B cell (primary cell): ENCODE measurements at regions of chr5 and their contacts with region 1.

Region 1: DNA sequence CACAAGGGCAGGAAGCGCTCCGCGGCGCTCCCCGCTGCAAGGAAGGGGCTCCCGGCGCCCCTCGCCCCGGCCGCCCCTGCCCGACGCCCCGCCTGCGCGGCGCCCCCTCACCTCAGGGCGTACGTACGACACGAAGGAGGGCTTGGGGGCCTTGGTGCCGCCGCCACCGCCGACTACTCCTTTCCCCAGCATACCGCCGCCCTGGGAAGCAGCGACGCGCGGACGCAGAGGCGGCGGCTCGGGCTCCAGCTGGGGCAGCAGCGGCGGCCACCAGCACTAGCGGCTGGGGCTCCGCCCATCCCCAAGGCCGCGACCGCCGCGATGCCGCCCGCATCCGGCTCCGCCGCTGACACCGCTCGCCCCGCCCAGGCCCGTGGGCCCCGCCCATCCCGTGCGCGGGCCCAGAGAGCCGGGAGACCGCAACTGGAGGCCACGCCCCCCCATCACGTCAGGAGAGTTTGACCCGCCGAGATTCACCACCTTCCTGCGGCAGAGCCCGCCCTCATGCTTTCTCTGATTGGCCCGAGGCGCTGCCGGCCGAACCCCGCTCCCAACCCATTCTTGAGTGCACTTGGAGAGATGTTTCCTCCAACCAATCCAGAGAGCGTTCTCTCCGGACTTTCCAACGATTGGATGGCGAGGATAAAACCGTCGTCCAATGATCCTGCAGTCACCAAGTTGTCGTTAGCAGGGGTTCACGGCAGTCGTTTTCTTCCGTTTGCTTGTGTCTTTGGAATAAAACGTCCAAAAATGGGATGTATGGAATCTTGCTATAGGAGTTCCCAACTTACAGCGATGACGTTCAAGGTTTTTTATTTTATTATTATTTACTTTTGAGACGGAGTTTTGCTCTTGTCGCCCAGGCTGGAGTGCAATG is at the start of gene MTMR12:
- DNase-seq: peak; percentile 100
- ATAC-seq: peak; percentile 88
- H3K4me3 ChIP-seq: peak within 1 kb of the TSS; percentile 75 to 96 (median 82)
- H3K4me3 Mint-ChIP-seq: peak within 1 kb of the TSS; percentile 88
- H3K27ac ChIP-seq: peak within 1 kb of the TSS; percentile 89 to 92
- H3K27ac Mint-ChIP-seq: peak within 1 kb of the TSS; percentile 95
- H3K4me1 ChIP-seq: peaks cover 31 to 43% of the 10 kb centered on the region in 2 donors
- H3K4me1 Mint-ChIP-seq: peaks cover 38% of the 10 kb centered on the region
- H3K27me3 ChIP-seq: no peaks in the 10 kb centered on the region
- H3K27me3 Mint-ChIP-seq: no peaks in the 10 kb centered on the region
- CTCF ChIP-seq: no peak
- total RNA-seq, gene MTMR12: 29.2 and 29.4 TPM in 2 replicates

Region 2: DNA sequence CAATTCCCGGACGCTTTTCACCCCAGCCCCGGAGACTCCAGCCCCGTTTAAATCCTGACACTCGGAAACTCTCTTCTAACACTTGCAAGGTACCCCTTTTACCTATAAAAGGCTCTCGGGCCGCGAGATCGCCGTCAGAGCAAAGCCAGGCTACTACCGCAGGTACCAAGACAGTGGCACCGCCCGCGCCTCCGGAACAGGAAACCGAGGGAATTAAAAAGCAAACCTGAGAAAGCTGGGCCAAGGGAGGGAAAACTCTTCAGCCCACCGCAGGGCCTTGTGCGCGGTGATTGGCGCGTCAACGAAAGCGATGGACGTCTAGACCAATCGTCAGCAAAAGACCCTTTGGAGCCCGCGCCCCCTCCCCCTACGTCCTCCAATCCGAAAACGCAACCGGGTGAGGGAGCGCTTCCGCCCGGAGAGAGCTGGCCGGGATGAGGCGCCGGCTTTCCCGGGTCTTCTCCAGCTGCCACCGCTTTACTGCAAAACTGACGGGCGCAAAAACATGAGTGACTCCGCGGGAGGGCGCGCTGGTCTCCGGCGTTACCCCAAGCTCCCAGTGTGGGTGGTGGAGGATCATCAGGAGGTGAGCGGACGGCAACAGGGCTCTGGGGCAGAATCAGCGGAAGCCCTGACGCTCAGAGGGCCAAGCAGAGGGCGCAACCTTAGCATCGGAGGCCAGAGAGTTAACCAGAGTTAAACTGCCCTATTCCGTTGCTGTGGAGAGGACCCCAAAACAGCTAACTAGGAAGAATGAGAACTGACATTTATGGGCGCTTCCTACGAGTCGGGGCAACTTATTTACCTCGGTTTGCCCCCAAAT is 780.8 kb before region 1 on chr5 and contains the starts of genes C5orf22 and DROSHA:
- CTCF ChIA-PET with region 1: no interaction called
- POLR2A ChIA-PET with region 1: no interaction called
- intact Hi-C with region 1: loop called (anchors 2 kb)
- DNase-seq: peak; percentile 90
- ATAC-seq: peak; percentile 98
- H3K4me3 ChIP-seq: peak within 1 kb of the TSS; percentile 64 to 94 (median 91)
- H3K4me3 Mint-ChIP-seq: peak within 1 kb of the TSS; percentile 100
- H3K27ac ChIP-seq: peak within 1 kb of the TSS; percentile 29 to 70
- H3K27ac Mint-ChIP-seq: peak within 1 kb of the TSS; percentile 94
- H3K4me1 ChIP-seq: peaks cover 23% of the 10 kb centered on the region in 2 donors
- H3K4me1 Mint-ChIP-seq: peaks cover 38% of the 10 kb centered on the region
- H3K27me3 ChIP-seq: no peaks in the 10 kb centered on the region
- H3K27me3 Mint-ChIP-seq: no peaks in the 10 kb centered on the region
- CTCF ChIP-seq: no peak
- total RNA-seq, gene C5orf22: 28.2 and 28.9 TPM in 2 replicates
- total RNA-seq, gene DROSHA: 62.4 and 65.4 TPM in 2 replicates

Region 3: DNA sequence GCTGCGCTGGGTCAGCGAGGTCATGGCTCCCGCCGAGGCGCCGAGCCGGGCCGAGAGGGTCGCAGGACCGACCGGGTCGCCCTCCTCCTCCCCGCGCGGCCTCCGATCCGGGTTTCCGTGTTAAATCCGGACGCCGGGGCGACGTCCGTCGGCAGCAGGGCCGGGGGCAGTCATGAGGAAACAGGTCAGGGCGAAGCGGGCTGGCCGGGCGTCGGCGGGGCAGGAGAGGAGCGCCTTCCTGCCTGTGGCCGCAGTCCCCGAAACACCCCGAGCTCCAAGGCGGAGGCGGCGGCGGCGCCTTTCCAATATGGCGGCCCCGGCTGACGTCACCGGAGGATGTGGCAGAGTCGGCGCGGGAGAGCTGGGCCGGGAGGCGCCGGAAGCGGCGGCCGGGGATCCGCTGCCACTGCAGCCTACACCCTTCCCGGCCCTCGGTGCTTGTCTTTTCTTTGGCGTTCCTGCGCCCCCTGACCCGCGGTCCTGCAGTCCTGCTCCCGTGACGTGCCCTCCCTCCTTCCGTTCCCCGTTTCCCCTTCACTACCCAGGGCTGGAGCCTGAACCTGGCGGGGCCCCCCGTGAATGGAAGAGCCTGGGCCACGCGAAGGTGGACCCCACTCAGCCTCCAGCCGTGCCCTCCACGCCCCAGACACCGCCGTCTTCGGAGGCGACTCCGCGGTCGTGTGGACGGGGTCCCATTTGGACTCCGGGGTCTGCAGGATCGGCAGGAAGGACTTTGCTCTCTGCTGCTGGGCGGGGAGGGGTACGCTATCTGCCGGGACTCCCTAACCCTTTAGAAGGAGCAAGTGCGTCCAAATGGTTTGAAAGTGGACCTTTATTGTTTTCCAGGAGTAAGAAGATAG is 138.6 kb before region 1 on chr5 and contains the start of gene GOLPH3:
- CTCF ChIA-PET with region 1: no interaction called
- POLR2A ChIA-PET with region 1: interaction called, 4 read pairs
- intact Hi-C with region 1: loop called (anchors 1 kb)
- DNase-seq: peak; percentile 91
- ATAC-seq: peak; percentile 85
- H3K4me3 ChIP-seq: peak within 1 kb of the TSS; percentile 65 to 92 (median 80)
- H3K4me3 Mint-ChIP-seq: peak within 1 kb of the TSS; percentile 96
- H3K27ac ChIP-seq: peak within 1 kb of the TSS; percentile 95 to 97
- H3K27ac Mint-ChIP-seq: peak within 1 kb of the TSS; percentile 96
- H3K4me1 ChIP-seq: peaks cover 13 to 19% of the 10 kb centered on the region in 2 donors
- H3K4me1 Mint-ChIP-seq: peaks cover 36% of the 10 kb centered on the region
- H3K27me3 ChIP-seq: no peaks in the 10 kb centered on the region
- H3K27me3 Mint-ChIP-seq: no peaks in the 10 kb centered on the region
- CTCF ChIP-seq: no peak
- total RNA-seq, gene GOLPH3: 58.8 and 62.6 TPM in 2 replicates

Region 4: DNA sequence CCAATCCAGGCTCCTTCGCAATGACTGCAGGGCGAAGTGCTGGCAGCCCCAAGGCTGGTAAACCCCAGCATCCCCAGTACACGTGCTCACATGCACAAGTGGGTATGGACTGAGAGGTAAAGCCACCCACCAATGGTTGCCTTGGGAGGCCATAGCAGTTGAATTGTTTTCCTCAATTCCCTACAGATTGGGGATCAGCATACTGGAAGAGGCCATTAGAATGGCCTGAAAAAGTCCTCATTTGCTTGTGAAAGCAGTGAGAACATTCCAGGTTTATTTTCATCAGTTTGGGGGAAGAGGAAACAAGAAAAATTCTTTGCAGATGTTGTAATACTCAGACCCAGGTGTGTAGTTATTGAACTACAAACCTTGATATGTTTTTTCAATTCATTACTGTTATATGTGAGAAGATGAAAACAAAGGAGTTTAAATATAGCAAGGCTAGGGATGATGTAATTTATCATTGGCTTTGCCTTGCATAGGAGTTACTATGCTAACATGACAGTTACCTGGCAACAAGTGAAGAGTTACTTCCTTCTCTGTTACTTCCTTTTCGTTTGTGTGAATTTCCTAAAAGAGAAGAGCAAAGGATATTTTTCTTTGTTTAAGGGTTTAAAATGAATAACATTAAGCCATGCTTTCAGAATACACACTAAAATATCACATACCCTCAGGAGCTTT is 36.6 kb before region 1 on chr5:
- CTCF ChIA-PET with region 1: no interaction called
- POLR2A ChIA-PET with region 1: no interaction called
- intact Hi-C with region 1: loop called (anchors 1 kb)
- DNase-seq: peak; percentile 76
- ATAC-seq: peak; percentile 82
- H3K4me3 ChIP-seq: peak overlapping the region in 1 of 5 experiments; percentile 22
- H3K4me3 Mint-ChIP-seq: peak overlapping the region; percentile 74
- H3K27ac ChIP-seq: peak overlapping the region; percentile 91 to 97
- H3K27ac Mint-ChIP-seq: peak overlapping the region; percentile 95
- H3K4me1 ChIP-seq: peaks cover 25 to 37% of the 10 kb centered on the region in 2 donors
- H3K4me1 Mint-ChIP-seq: peaks cover 61% of the 10 kb centered on the region
- H3K27me3 ChIP-seq: no peaks in the 10 kb centered on the region
- H3K27me3 Mint-ChIP-seq: no peaks in the 10 kb centered on the region
- CTCF ChIP-seq: no peak

Region 5: DNA sequence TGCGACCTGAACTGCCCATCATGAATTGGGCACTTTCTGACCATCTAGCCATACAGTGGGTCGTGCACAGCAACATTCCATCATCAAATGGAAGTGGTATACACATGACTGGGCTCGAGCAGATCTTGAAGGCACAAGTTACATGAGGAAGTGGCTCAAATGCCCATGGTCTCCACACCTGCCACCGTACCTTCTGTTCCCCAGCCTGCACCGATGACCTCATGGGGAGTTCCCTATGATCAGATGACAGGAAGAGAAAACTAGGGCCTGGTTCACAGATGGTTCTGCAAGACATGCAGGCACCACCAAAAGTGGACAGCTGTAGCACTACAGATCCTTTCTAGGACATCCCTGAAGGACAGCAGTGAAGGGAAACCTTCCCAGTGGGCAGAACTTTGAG is 22.0 kb before region 1 on chr5:
- CTCF ChIA-PET with region 1: interaction called, 4 read pairs
- POLR2A ChIA-PET with region 1: no interaction called
- intact Hi-C with region 1: loop called (anchors 1 kb)
- DNase-seq: peak; percentile 88
- ATAC-seq: peak; percentile 91
- H3K4me3 ChIP-seq: no peak overlapping the region
- H3K4me3 Mint-ChIP-seq: peak overlapping the region; percentile 79
- H3K27ac ChIP-seq: peak overlapping the region; percentile 73 to 86
- H3K27ac Mint-ChIP-seq: peak overlapping the region; percentile 91
- H3K4me1 ChIP-seq: peaks cover 32 to 34% of the 10 kb centered on the region in 2 donors
- H3K4me1 Mint-ChIP-seq: peaks cover 64% of the 10 kb centered on the region
- H3K27me3 ChIP-seq: no peaks in the 10 kb centered on the region
- H3K27me3 Mint-ChIP-seq: no peaks in the 10 kb centered on the region
- CTCF ChIP-seq: no peak

Region 6: GRCh38 chr5:32329308-32329834 is 16.5 kb after region 1 on chr5:
- CTCF ChIA-PET with region 1: interaction called, 13 read pairs
- POLR2A ChIA-PET with region 1: no interaction called
- intact Hi-C with region 1: no loop called
- DNase-seq: peak; percentile 71
- ATAC-seq: peak; percentile 84
- H3K4me3 ChIP-seq: no peak overlapping the region
- H3K4me3 Mint-ChIP-seq: no peak overlapping the region
- H3K27ac ChIP-seq: no peak overlapping the region
- H3K27ac Mint-ChIP-seq: no peak overlapping the region
- H3K4me1 ChIP-seq: no peaks in the 10 kb centered on the region
- H3K4me1 Mint-ChIP-seq: peaks cover 2% of the 10 kb centered on the region
- H3K27me3 ChIP-seq: no peaks in the 10 kb centered on the region
- H3K27me3 Mint-ChIP-seq: no peaks in the 10 kb centered on the region
- CTCF ChIP-seq: peak; percentile 74

Region 7: GRCh38 chr5:32355686-32356085 is 42.8 kb after region 1 on chr5:
- CTCF ChIA-PET with region 1: no interaction called
- POLR2A ChIA-PET with region 1: no interaction called
- intact Hi-C with region 1: no loop called
- DNase-seq: no peak
- ATAC-seq: no peak
- H3K4me3 ChIP-seq: no peak overlapping the region
- H3K4me3 Mint-ChIP-seq: no peak overlapping the region
- H3K27ac ChIP-seq: no peak overlapping the region
- H3K27ac Mint-ChIP-seq: no peak overlapping the region
- H3K4me1 ChIP-seq: no peaks in the 10 kb centered on the region
- H3K4me1 Mint-ChIP-seq: no peaks in the 10 kb centered on the region
- H3K27me3 ChIP-seq: no peaks in the 10 kb centered on the region
- H3K27me3 Mint-ChIP-seq: no peaks in the 10 kb centered on the region
- CTCF ChIP-seq: no peak

Region 8: DNA sequence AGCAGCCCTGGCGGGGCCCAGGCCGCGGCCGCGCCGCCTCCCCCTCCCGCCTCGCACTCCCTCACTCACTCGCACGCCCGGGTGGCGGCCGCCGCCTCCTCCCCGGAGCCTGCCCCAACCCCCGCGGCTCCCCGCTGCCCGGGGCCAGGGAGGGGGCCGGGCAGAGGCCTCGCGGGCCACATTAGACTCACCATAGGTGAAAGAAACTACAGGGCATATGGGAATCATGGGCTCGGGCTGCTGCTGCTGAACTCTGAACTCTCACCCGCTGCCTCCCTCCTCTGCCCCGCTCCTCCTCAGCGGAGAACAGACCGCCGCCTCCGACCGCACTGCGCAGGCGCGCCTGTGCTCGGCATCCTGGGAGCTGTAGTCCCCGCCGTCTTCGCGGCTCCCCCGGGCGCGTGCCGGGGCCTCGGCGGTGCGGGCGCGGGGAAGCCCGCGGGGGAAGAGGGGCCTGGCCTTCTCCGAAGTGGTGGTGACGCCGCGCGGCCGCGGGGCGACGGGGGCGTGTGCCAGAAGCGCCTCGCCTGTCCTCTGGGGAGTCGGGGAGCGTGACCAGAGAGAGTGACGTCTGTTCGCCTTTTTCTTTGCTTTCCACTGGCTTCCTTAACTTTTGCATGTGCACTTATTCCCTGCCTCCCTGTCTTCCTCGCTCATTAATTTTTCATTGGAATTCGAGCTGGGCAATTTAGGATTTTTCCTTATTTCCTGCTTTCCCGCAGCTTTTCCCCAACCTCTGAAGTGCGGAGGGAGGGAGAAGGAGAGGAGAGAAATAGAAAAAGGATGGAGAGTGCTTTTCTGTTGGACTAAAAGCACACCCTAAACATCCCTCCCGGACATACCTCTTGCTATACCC is 131.8 kb after region 1 on chr5 and contains the start of gene ZFR:
- CTCF ChIA-PET with region 1: no interaction called
- POLR2A ChIA-PET with region 1: no interaction called
- intact Hi-C with region 1: loop called (anchors 1 kb)
- DNase-seq: peak; percentile 94
- ATAC-seq: peak; percentile 80
- H3K4me3 ChIP-seq: peak within 1 kb of the TSS; percentile 55 to 91 (median 76)
- H3K4me3 Mint-ChIP-seq: peak within 1 kb of the TSS; percentile 93
- H3K27ac ChIP-seq: peak within 1 kb of the TSS; percentile 88 to 92
- H3K27ac Mint-ChIP-seq: peak within 1 kb of the TSS; percentile 96
- H3K4me1 ChIP-seq: peaks cover 36 to 42% of the 10 kb centered on the region in 2 donors
- H3K4me1 Mint-ChIP-seq: peaks cover 59% of the 10 kb centered on the region
- H3K27me3 ChIP-seq: no peaks in the 10 kb centered on the region
- H3K27me3 Mint-ChIP-seq: no peaks in the 10 kb centered on the region
- CTCF ChIP-seq: no peak
- total RNA-seq, gene ZFR: 69.0 and 74.6 TPM in 2 replicates